K562 (cell line): ENCODE measurements at regions of chr5 and their contacts with region 1.

Region 1: DNA sequence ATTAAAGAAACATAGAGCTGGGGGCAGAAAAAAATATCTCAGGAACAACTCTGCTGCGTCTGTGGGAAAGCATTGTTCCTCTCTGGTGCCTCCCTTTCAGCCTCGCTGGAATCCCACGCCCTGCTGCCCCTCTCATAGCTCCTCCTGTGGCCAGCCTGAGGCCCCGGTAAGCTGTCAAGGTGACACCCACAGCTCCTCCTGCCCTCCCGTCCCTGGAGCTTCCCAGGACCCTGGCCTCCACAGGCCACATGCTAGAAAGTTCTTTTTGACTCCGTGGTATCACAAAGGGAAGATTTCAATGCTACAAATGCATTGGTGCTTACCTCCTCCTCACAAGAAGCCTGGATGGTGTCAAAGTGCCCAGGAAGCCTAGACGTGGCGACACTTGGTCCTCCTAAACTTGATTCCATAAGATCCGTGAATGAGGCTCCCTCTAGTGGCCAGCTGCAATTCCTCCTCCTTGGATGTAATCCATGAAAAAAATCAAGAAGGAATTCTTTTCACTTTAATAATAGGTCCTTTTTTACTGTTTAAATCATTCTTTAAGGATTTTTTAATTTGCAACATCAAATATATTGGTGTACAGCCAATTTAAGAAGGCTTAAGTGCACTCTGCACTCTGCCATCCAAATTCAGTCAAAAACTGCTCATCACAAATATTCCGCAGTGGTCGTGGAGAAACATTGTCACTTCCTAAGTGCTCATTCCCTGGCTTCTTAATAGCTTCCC is 104.9 kb downstream of the CFAP90 start:
- DNase-seq: peak; percentile 63 to 80 (median 66)
- ATAC-seq: peak; percentile 95
- H3K4me3 ChIP-seq: no peak overlapping the region
- H3K27ac ChIP-seq: no peak overlapping the region
- H3K4me1 ChIP-seq: no peaks in the 10 kb centered on the region
- H3K27me3 ChIP-seq: no peaks in the 10 kb centered on the region
- CTCF ChIP-seq: peak; percentile 72 to 90 (median 87)
- EP300 ChIP-seq: no peak
- POLR2A ChIP-seq: no peak
- RAD21 ChIP-seq: peak; percentile 67 to 82

Region 2: GRCh38 chr5:6765612-6766525 is 980.2 kb before region 1 on chr5:
- CTCF ChIA-PET with region 1: interaction called, 3 read pairs
- POLR2A ChIA-PET with region 1: no interaction called
- in situ Hi-C with region 1: no loop called
- intact Hi-C with region 1: loop called (anchors 5 kb)
- DNase-seq: peak; percentile 81 to 86 (median 84)
- ATAC-seq: peak; percentile 93
- H3K4me3 ChIP-seq: no peak overlapping the region
- H3K27ac ChIP-seq: no peak overlapping the region
- H3K4me1 ChIP-seq: peaks cover 0 to 14% of the 10 kb centered on the region in 2 experiments; a peak in 2 of 5 replicates
- H3K27me3 ChIP-seq: peaks cover 17 to 48% of the 10 kb centered on the region in 2 experiments; a peak in 4 of 5 replicates
- CTCF ChIP-seq: peak; percentile 89 to 92 (median 91)
- EP300 ChIP-seq: no peak
- POLR2A ChIP-seq: no peak
- RAD21 ChIP-seq: peak; percentile 44 to 83

Region 3: DNA sequence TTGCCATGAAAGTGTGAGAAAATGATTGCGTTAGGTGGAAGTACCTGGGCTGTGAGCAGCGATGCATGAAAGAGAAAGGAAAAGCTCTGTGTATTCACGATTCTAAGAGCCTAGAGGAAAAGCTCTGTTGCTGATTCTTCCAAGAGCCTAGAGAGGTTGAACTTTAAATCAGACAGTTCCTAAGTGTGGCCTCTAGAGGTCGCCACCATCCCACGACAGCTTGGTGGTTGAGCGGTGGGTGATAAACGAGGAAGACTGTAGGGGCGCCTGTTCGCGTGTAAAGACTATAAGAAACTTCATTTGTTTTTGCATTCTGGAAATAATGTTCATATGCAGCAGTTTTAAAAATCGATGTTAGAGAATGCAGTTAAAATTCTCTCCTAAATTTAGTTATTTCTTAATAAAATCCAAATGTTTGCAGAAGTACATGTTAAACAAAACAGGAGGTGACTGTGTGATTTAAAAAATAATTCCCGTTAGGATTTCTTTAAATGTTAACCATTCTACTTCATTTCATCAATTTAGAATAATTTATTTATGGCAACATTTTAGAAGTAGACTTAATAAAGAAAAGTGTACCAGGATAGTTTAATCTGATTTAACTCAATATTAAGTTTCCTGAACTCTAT is 925.1 kb before region 1 on chr5:
- CTCF ChIA-PET with region 1: no interaction called
- POLR2A ChIA-PET with region 1: no interaction called
- in situ Hi-C with region 1: loop called (anchors 10 kb)
- intact Hi-C with region 1: loop called (anchors 2 kb)
- DNase-seq: peak; percentile 80 to 89 (median 88)
- ATAC-seq: peak; percentile 97
- H3K4me3 ChIP-seq: no peak overlapping the region
- H3K27ac ChIP-seq: no peak overlapping the region
- H3K4me1 ChIP-seq: peaks cover 0 to 4% of the 10 kb centered on the region in 2 experiments; a peak in 1 of 5 replicates
- H3K27me3 ChIP-seq: no peaks in the 10 kb centered on the region; a peak in 1 of 5 replicates
- CTCF ChIP-seq: peak; percentile 96 to 99 (median 99)
- EP300 ChIP-seq: no peak
- POLR2A ChIP-seq: no peak
- RAD21 ChIP-seq: peak; percentile 82 to 84

Region 4: GRCh38 chr5:7261049-7261448 is 485.0 kb before region 1 on chr5:
- CTCF ChIA-PET with region 1: interaction called, 3 read pairs
- POLR2A ChIA-PET with region 1: no interaction called
- in situ Hi-C with region 1: no loop called
- intact Hi-C with region 1: loop called (anchors 5 kb)
- DNase-seq: peak; percentile 18 to 49 (median 20)
- ATAC-seq: peak; percentile 68
- H3K4me3 ChIP-seq: no peak overlapping the region
- H3K27ac ChIP-seq: no peak overlapping the region
- H3K4me1 ChIP-seq: no peaks in the 10 kb centered on the region
- H3K27me3 ChIP-seq: no peaks in the 10 kb centered on the region
- CTCF ChIP-seq: peak; percentile 48 to 71 (median 63)
- EP300 ChIP-seq: no peak
- POLR2A ChIP-seq: no peak
- RAD21 ChIP-seq: peak; percentile 68 to 81

Region 5: DNA sequence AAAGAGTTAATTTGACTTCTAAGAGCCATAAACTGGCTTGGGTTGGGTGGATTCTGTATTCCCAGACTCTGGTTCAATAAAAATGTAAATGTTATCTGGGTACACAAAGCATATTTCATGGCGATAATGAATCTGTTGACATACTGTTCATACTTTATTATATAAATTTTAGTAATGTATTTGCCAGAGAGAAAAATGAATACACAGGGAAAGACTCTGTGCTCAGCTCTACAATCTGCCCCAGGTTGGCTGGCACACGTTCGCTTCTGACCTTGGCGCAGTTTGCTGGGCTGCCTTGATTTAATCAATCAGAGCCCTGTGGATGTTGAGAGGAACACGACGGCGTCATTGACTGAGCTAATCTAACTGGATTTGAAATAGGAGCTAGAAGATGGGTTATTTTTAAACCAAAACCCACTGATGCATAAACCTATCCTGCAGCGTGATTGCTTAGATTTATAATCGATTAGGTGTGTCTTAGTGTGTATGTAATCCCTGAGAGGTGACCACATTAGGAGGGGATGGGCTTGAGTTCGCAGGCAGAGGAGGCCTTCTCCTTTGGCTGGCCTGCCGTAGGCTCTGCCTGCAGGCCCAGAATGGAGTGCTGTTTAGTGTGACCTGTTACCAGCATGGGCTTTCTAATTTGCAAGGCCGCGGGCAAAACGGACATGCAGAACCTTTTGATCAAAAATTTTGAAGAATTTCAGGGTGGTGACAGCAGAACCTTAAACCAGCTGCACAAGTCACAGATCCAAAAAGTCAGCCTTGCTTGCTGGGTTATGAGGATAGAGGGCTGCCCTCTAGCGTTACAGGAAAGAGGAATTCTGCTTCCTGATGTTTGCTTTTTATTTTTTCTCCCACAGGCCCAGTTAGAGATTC is 354.0 kb before region 1 on chr5:
- CTCF ChIA-PET with region 1: no interaction called
- POLR2A ChIA-PET with region 1: no interaction called
- in situ Hi-C with region 1: no loop called
- intact Hi-C with region 1: loop called (anchors 10 kb)
- DNase-seq: peak in 2 of 4 experiments; percentile 22 to 34
- ATAC-seq: peak; percentile 71
- H3K4me3 ChIP-seq: no peak overlapping the region
- H3K27ac ChIP-seq: no peak overlapping the region
- H3K4me1 ChIP-seq: peaks cover 0 to 10% of the 10 kb centered on the region in 2 experiments; a peak in 1 of 5 replicates
- H3K27me3 ChIP-seq: peaks cover 0 to 20% of the 10 kb centered on the region in 2 experiments; a peak in 2 of 5 replicates
- CTCF ChIP-seq: peak; percentile 48 to 63 (median 52)
- EP300 ChIP-seq: no peak
- POLR2A ChIP-seq: no peak
- RAD21 ChIP-seq: peak; percentile 37 to 59

Region 6: DNA sequence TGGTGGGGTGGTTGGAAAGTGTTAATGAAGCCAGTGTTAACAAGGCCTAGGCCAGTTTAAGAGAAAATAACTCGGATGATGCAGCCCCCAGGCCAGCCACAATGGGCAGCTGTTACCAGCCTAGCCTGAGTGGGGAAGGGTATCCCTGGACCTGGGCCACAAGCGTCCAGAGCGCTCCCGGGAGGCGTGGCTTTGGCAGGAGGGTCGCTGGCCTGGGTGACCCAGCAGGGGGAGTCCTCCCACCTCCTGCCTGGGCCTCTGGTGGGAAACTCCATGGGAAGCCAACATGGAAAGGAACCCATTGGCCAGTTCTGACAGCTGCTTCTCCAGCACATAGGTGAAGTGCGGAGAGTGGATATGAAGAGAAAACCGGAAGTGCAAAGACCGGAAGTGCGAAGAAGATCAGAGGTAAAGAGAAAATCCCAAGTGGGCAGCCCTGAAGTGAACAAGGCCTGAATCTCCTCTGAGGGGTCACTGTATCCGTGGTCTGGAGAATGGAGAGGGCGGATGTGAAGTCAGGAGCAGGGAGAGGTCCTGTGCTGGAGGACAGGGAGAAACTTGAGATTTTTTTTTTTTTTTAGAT is 271.1 kb before region 1 on chr5:
- CTCF ChIA-PET with region 1: no interaction called
- POLR2A ChIA-PET with region 1: no interaction called
- in situ Hi-C with region 1: no loop called
- intact Hi-C with region 1: no loop called
- DNase-seq: peak in 2 of 4 experiments; percentile 3 to 15
- ATAC-seq: peak; percentile 62
- H3K4me3 ChIP-seq: no peak overlapping the region
- H3K27ac ChIP-seq: no peak overlapping the region
- H3K4me1 ChIP-seq: peaks cover 0 to 3% of the 10 kb centered on the region in 2 experiments; a peak in 1 of 5 replicates
- H3K27me3 ChIP-seq: no peaks in the 10 kb centered on the region
- CTCF ChIP-seq: peak in 1 of 3 experiments; percentile 16; a peak in 1 of 6 replicates
- EP300 ChIP-seq: no peak
- POLR2A ChIP-seq: no peak
- RAD21 ChIP-seq: no peak

Region 7: DNA sequence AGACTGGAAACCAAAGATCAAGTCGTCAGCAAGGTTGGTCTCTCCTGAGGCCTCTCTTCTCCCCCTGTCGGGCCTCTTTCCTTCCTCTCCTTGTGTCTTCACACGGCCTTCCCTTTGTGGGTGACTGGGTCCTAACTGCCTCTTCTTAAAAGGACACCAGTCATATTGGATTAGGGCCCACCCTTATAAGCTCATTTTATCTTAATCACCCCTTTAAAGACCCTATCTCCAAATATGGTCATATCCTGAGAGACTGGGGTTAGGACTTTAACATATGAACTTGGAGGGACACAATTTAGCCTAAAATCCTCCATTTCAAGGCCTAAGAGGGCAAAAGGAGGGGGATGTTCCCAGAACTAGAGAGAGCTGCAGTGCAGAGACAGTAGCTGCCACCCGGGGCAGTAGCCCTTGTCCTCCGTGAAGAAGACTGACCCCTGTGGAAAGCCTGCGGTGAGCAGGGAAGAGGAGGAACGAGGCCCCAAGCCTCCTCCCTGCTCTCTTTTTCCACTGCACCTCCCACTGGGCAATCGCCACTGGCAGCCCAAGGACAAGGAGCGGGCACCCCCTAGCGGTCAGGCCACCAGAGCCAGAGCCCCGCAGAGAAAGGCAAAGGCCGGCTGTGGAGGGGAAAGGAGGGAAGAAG is 70.0 kb after region 1 on chr5:
- CTCF ChIA-PET with region 1: no interaction called
- POLR2A ChIA-PET with region 1: no interaction called
- in situ Hi-C with region 1: no loop called
- intact Hi-C with region 1: loop called (anchors 2 kb)
- DNase-seq: peak; percentile 86 to 90 (median 86)
- ATAC-seq: peak; percentile 99
- H3K4me3 ChIP-seq: no peak overlapping the region
- H3K27ac ChIP-seq: no peak overlapping the region
- H3K4me1 ChIP-seq: peaks cover 2 to 4% of the 10 kb centered on the region in 2 experiments; a peak in 1 of 5 replicates
- H3K27me3 ChIP-seq: peaks cover 15 to 38% of the 10 kb centered on the region in 2 experiments
- CTCF ChIP-seq: peak; percentile 95 to 98 (median 98)
- EP300 ChIP-seq: no peak
- POLR2A ChIP-seq: no peak
- RAD21 ChIP-seq: peak; percentile 71 to 87

Region 8: DNA sequence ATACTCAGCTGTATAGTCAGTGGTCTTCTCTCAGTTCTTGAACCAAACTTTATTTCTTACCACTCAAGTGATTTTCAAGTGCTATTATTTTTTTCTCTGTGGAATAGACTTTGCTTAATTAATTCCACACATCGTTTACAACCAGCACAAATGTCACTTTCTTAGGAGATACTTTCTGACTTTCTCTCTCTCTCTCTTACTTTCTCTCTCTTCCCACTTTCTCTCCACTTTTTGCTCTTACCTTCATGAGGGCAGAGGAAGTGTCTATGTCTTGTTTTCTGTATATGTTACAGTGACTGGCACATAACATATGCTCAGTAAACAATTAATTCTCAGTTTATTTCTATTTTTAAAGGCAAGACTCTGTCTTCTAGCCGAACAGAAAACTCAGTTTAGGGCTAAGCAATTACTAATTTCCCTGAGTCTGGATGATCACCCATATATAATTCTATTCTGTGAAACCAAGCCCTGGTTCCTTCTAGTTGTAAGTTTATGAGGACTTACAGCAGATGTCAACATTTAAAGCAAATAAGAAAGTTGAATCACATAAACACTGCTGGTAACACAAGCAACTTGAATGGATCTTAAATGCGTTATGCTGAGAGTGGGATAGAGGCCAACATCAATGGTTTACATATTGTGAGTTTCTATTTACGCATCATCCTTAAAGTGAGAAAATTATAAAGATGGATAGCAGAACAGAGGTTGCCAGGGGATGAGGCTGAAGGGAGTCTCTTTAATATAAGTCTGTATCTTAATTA is 914.3 kb after region 1 on chr5:
- CTCF ChIA-PET with region 1: no interaction called
- POLR2A ChIA-PET with region 1: no interaction called
- in situ Hi-C with region 1: no loop called
- intact Hi-C with region 1: no loop called
- DNase-seq: no peak
- ATAC-seq: no peak
- H3K4me3 ChIP-seq: no peak overlapping the region
- H3K27ac ChIP-seq: no peak overlapping the region
- H3K4me1 ChIP-seq: no peaks in the 10 kb centered on the region
- H3K27me3 ChIP-seq: no peaks in the 10 kb centered on the region
- CTCF ChIP-seq: no peak
- EP300 ChIP-seq: no peak
- POLR2A ChIP-seq: no peak
- RAD21 ChIP-seq: no peak